MCF 10A (cell line): ENCODE measurements at regions of chr10 and their contacts with region 1.

Region 1: DNA sequence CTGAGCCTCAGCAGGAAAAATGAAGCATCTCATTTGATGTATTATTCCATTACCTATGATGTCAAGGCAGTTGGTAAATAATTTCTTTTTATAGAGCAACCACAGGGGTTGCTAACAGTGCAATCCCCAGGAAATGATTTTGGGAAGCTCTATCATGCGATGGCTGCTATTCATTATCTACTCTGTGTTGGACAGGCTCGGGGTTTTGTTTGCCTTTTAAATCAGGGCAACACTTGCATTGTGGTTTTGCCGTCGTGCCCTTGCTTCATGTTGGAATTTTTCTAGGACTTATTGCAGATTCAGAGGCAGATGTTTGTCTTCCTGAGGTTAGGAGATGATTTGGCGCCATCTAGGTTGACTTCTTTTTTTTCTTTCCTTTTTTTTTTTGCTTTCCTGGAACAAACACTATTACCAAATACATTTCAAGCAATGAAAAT is 128.4 kb downstream of the BICC1 start:
- DNase-seq: peak; percentile 86
- H3K4me3 Mint-ChIP-seq: peak overlapping the region; percentile 62
- H3K27ac Mint-ChIP-seq: peak overlapping the region; percentile 91
- H3K4me1 Mint-ChIP-seq: peaks cover 63% of the 10 kb centered on the region
- H3K27me3 Mint-ChIP-seq: no peaks in the 10 kb centered on the region
- CTCF ChIP-seq: peak; percentile 25

Region 2: GRCh38 chr10:58502956-58503355 is 138.2 kb before region 1 on chr10:
- CTCF ChIA-PET with region 1: no interaction called
- POLR2A ChIA-PET with region 1: no interaction called
- intact Hi-C with region 1: no loop called
- DNase-seq: no peak
- H3K4me3 Mint-ChIP-seq: no peak overlapping the region
- H3K27ac Mint-ChIP-seq: no peak overlapping the region
- H3K4me1 Mint-ChIP-seq: no peaks in the 10 kb centered on the region
- H3K27me3 Mint-ChIP-seq: no peaks in the 10 kb centered on the region
- CTCF ChIP-seq: no peak

Region 3: GRCh38 chr10:58513188-58514110 is 127.7 kb before region 1 on chr10:
- CTCF ChIA-PET with region 1: interaction called, 7 read pairs
- POLR2A ChIA-PET with region 1: interaction called, 6 read pairs
- intact Hi-C with region 1: loop called (anchors 5 kb)
- DNase-seq: peak; percentile 73
- H3K4me3 Mint-ChIP-seq: peak overlapping the region; percentile 74
- H3K27ac Mint-ChIP-seq: peak overlapping the region; percentile 89
- H3K4me1 Mint-ChIP-seq: peaks cover 27% of the 10 kb centered on the region
- H3K27me3 Mint-ChIP-seq: no peaks in the 10 kb centered on the region
- CTCF ChIP-seq: no peak

Region 4: DNA sequence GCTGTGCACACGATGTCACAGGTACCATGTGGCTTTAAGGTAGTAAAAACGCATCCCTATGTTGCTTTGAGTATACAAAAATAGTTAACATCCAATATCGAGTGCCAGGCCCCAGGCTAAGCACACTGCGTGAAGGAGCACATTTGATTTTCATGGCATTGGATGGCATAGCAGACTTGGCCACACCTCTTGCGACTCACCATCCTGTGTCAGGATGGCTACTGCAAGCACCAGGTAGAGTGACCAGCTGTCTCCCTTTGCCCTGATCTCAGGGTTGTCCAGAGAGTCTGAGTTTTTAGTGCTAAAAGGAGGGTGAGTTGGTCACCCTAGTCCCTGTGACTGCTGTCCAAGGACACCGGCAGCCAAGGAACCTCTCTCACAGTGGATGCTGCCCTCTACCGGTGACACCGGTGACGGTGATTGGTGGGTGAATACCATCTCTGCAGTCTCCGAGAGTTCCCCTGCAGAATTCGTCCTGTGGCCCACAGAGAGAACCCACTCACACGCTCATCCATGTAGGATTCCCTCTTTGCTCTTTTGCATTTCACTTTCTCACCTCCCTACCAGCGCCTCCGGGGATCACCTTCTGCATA is 52.3 kb before region 1 on chr10:
- CTCF ChIA-PET with region 1: interaction called, 3 read pairs
- POLR2A ChIA-PET with region 1: interaction called, 5 read pairs
- intact Hi-C with region 1: loop called (anchors 5 kb)
- DNase-seq: peak; percentile 60
- H3K4me3 Mint-ChIP-seq: no peak overlapping the region
- H3K27ac Mint-ChIP-seq: peak overlapping the region; percentile 52
- H3K4me1 Mint-ChIP-seq: peaks cover 29% of the 10 kb centered on the region
- H3K27me3 Mint-ChIP-seq: no peaks in the 10 kb centered on the region
- CTCF ChIP-seq: no peak

Region 5: DNA sequence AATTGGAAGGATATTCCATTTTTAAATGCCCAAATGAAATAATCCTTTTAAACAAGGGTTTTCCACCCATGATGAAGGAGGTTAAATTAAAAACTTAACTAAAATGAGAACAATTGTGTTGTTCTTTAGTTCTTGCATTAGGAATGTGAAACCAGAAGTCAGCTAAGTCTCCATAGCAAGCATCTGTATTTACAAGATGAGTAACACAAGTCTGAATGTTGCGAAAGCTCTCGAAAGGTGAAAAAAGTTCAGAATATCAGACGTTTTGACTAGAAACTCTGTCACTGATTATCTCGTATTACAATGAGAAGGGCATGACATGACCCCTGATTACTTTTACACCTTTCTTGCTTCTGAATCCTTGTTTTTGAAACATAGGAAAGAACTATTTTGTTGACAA is 21.2 kb after region 1 on chr10:
- CTCF ChIA-PET with region 1: interaction called, 29 read pairs
- POLR2A ChIA-PET with region 1: interaction called, 47 read pairs
- intact Hi-C with region 1: loop called (anchors 1 kb)
- DNase-seq: peak; percentile 91
- H3K4me3 Mint-ChIP-seq: peak overlapping the region; percentile 12
- H3K27ac Mint-ChIP-seq: peak overlapping the region; percentile 91
- H3K4me1 Mint-ChIP-seq: peaks cover 42% of the 10 kb centered on the region
- H3K27me3 Mint-ChIP-seq: no peaks in the 10 kb centered on the region
- CTCF ChIP-seq: no peak

Region 6: GRCh38 chr10:58755677-58756076 is 114.6 kb after region 1 on chr10:
- CTCF ChIA-PET with region 1: no interaction called
- POLR2A ChIA-PET with region 1: interaction called, 3 read pairs
- intact Hi-C with region 1: loop called (anchors 2 kb)
- DNase-seq: peak; percentile 83
- H3K4me3 Mint-ChIP-seq: peak overlapping the region; percentile 75
- H3K27ac Mint-ChIP-seq: peak overlapping the region; percentile 90
- H3K4me1 Mint-ChIP-seq: peaks cover 14% of the 10 kb centered on the region
- H3K27me3 Mint-ChIP-seq: no peaks in the 10 kb centered on the region
- CTCF ChIP-seq: no peak

Region 7: DNA sequence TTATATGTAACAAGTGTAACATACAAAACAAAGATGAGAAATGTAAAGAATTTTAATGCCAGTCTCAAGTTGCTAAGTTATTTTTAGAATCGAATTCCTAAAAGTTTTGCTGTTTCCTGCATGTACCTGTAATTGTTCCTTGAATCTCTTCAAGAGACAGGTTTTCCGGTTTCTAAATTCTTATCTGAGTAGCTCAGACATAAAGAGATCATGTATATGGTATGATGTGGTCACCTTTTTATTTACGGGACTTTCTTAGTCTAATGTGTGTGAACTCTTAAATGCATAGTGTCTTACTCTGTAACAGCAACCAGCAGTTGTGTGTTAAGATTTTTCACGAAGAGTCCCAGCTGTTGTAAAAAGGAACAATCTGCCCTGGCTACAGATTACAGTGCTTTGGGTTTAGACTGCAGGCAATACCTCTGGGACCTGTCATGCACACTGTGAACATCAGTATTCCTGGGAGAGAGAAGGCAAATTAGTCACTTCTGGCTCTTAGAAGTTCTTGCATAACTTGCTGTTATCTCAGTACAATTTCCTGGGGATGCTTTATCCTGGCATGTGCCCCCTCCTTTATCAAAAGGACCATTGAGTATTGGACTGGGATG is 135.0 kb after region 1 on chr10:
- CTCF ChIA-PET with region 1: interaction called, 6 read pairs
- POLR2A ChIA-PET with region 1: interaction called, 4 read pairs
- intact Hi-C with region 1: loop called (anchors 5 kb)
- DNase-seq: peak; percentile 50
- H3K4me3 Mint-ChIP-seq: no peak overlapping the region
- H3K27ac Mint-ChIP-seq: peak overlapping the region; percentile 10
- H3K4me1 Mint-ChIP-seq: peaks cover 32% of the 10 kb centered on the region
- H3K27me3 Mint-ChIP-seq: no peaks in the 10 kb centered on the region
- CTCF ChIP-seq: no peak